ENCODE measurements at regions of chr15 and their contacts with region 1.

Region 1: DNA sequence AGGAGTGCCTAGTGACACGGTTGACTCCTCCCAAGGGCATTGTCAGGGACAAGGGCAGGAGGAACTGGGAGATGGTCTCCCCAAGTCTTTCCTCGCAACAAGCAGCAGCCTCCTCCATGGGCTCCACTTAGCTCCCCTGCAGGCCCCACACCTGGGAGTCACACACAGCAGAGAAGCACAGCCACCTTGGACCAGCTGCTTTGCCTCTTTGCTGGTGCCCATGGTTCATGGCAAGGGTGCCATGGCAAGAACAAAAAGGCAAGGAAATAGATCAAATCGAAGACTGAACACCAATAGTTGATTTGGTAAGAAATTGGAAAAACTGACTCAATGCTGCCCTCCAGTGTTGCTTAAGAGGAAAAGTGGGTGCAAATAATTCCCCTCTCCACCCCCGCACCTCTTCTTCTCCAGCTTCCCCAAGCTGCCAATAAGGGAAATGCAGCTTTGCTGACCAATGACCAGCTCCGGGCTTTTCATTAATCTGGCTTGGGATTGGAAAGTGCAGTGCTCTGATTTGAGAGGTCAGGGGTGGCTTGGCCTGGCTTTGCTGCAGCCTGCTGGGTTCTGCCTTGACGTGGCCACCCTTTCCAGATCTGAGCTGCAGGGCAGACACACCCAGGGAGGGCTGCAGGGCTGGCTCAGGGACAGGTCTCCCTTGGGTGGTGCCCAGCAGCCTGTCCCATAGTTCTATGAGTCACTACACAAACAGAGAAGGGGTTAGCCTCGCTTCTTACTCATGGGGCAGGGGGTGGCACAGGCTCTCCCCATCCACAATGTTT is 162.0 kb downstream of the KLF13 start:
- DNase-seq: peak; percentile 78
- ATAC-seq: peak; percentile 73
- H3K4me3 ChIP-seq: no peak overlapping the region
- H3K27ac ChIP-seq: peak overlapping the region; percentile 49
- H3K4me1 ChIP-seq: peaks cover 18% of the 10 kb centered on the region
- H3K27me3 ChIP-seq: no peaks in the 10 kb centered on the region
- CTCF ChIP-seq: peak; percentile 71 to 93 (median 91)
- EP300 ChIP-seq: no peak
- POLR2A ChIP-seq: no peak
- RAD21 ChIP-seq: peak; percentile 84

Region 2: GRCh38 chr15:30985081-30985531 is 503.5 kb before region 1 on chr15:
- CTCF ChIA-PET with region 1: interaction called, 3 read pairs
- POLR2A ChIA-PET with region 1: no interaction called
- RAD21 ChIA-PET with region 1: no interaction called
- SMC1A ChIA-PET with region 1: no interaction called
- in situ Hi-C with region 1: no loop called
- intact Hi-C with region 1: loop called (anchors 10 kb)
- DNase-seq: no peak
- ATAC-seq: peak; percentile 59
- H3K4me3 ChIP-seq: peak overlapping the region; percentile 14; the same call in 1 of the 2 replicates
- H3K27ac ChIP-seq: peak overlapping the region; percentile 20; the same call in 1 of the 2 replicates
- H3K4me1 ChIP-seq: peaks cover 16% of the 10 kb centered on the region
- H3K27me3 ChIP-seq: no peaks in the 10 kb centered on the region
- CTCF ChIP-seq: no peak
- EP300 ChIP-seq: no peak
- POLR2A ChIP-seq: no peak
- RAD21 ChIP-seq: no peak

Region 3: GRCh38 chr15:31215490-31216214 is 273.0 kb before region 1 on chr15:
- CTCF ChIA-PET with region 1: interaction called, 197 read pairs
- POLR2A ChIA-PET with region 1: interaction called, 4 read pairs
- RAD21 ChIA-PET with region 1: interaction called, 24 read pairs
- SMC1A ChIA-PET with region 1: interaction called, 26 read pairs
- in situ Hi-C with region 1: no loop called
- intact Hi-C with region 1: loop called (anchors 1 kb)
- DNase-seq: no peak
- ATAC-seq: peak; percentile 91
- H3K4me3 ChIP-seq: peak overlapping the region; percentile 79
- H3K27ac ChIP-seq: peak overlapping the region; percentile 87
- H3K4me1 ChIP-seq: peaks cover 10% of the 10 kb centered on the region
- H3K27me3 ChIP-seq: no peaks in the 10 kb centered on the region
- CTCF ChIP-seq: peak; percentile 80 to 89 (median 89)
- EP300 ChIP-seq: no peak
- POLR2A ChIP-seq: peak; percentile 71
- RAD21 ChIP-seq: peak; percentile 88

Region 4: DNA sequence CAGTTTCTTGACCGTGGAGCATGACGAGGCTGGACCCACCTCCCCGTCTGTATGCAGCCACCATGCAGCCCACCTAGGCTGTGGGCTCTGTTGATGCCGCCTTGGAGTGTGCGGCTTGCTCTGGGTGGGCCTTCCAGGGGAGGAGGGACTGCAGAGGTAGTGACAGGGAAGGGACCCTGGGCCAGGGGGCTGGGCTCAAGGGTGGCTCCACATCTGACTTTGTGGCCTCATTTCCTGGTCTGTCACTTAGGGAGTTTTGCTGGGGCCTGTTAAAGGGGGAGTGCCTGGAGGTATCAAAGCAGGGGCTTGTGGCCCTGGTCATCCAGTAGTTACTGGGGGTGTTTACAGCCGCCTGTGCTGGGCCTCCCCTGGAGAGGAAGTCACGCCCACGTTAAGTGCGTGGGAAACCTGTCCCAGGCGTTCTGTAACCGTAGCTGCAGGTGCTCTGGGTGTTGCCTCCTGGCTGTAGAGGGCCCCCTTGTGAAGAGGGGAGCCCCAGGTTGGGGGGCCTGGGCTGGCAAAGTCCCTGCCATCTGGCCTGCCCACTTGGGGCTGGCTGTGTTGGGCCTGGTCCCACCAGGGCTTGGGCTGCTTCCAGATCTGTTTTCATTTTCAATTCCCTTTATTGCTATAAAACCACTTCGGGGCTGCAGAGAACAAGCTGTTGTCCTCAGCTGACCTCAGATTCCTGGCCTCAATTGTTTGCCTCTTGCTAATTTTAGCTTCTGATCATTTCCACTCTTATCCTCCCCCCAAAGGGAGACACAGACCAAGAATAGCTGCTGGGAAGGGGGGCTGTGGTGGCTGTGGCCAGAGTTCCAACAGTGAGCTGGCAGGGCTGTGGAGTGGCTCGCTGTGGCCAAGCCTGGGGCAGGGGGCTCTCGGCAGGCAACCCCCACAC is 135.5 kb before region 1 on chr15:
- CTCF ChIA-PET with region 1: interaction called, 15 read pairs
- POLR2A ChIA-PET with region 1: interaction called, 3 read pairs
- RAD21 ChIA-PET with region 1: interaction called, 7 read pairs
- SMC1A ChIA-PET with region 1: interaction called, 5 read pairs
- in situ Hi-C with region 1: no loop called
- intact Hi-C with region 1: no loop called
- DNase-seq: peak; percentile 83
- ATAC-seq: peak; percentile 87
- H3K4me3 ChIP-seq: peak overlapping the region; percentile 52; the same call in 1 of the 2 replicates
- H3K27ac ChIP-seq: peak overlapping the region; percentile 93
- H3K4me1 ChIP-seq: peaks cover 89% of the 10 kb centered on the region
- H3K27me3 ChIP-seq: no peaks in the 10 kb centered on the region
- CTCF ChIP-seq: peak in 2 of 3 experiments; percentile 7 to 22; a peak in 2 of 6 replicates
- EP300 ChIP-seq: peak; percentile 57 to 70; a peak in 3 of 4 replicates
- POLR2A ChIP-seq: peak; percentile 48; the same call in 1 of the 2 replicates
- RAD21 ChIP-seq: no peak

Region 5: DNA sequence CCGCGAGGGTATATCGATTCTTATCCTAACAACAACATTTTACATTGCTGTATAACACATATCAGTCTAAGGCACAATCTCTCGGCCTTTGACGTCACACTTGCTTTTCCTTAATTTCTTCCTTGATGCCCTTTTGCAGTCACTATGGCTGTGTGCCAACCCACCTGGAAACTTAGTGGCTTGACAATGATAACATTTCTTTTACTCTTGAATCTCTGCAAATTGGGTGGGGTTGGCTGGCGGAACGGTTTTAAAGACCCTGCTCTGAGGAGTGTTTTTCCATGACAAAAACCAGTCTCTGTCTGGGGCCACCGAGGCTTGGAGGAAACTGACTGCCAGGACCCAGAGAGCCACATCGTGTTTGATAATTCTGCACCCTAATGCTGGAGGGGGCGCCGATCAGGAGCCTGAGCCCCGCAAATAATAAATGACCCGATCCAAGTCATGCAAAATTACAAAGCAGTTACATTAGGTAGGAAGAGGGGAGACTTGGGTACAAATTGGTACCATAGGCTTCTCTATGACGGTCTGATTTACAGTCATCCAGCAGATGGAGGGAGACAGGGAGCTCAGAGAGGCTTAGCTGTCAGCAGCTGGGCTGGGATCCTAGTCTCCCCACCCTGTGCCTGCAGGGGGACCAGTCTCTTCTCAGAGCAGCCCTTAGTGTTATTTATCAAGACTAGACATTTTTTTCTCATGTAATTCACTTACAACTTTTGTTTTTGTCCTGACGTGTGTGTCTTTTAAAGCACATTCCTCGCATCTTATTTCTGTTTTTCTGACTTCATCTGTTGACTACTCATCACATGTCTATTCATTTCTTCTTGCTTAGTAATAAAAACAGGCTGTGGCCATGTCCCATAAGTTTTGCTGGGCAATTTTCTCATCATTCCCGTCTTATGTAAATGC is 46.2 kb before region 1 on chr15:
- CTCF ChIA-PET with region 1: interaction called, 336 read pairs
- POLR2A ChIA-PET with region 1: interaction called, 5 read pairs
- RAD21 ChIA-PET with region 1: interaction called, 213 read pairs
- SMC1A ChIA-PET with region 1: interaction called, 166 read pairs
- in situ Hi-C with region 1: loop called (anchors 5 kb)
- intact Hi-C with region 1: loop called (anchors 1 kb)
- DNase-seq: no peak
- ATAC-seq: 0 out of 3 replicates have a peak, but pooled peaks have one; percentile 26
- H3K4me3 ChIP-seq: no peak overlapping the region
- H3K27ac ChIP-seq: no peak overlapping the region
- H3K4me1 ChIP-seq: peaks cover 34% of the 10 kb centered on the region
- H3K27me3 ChIP-seq: no peaks in the 10 kb centered on the region
- CTCF ChIP-seq: peak in 2 of 3 experiments; percentile 5 to 26; a peak in 2 of 6 replicates
- EP300 ChIP-seq: no peak
- POLR2A ChIP-seq: no peak
- RAD21 ChIP-seq: no peak

Region 6: GRCh38 chr15:31472636-31473384 is 15.8 kb before region 1 on chr15:
- CTCF ChIA-PET with region 1: interaction called, 122 read pairs
- POLR2A ChIA-PET with region 1: interaction called, 7 read pairs
- RAD21 ChIA-PET with region 1: interaction called, 63 read pairs
- SMC1A ChIA-PET with region 1: interaction called, 48 read pairs
- in situ Hi-C with region 1: no loop called
- intact Hi-C with region 1: no loop called
- DNase-seq: peak; percentile 79
- ATAC-seq: peak; percentile 94
- H3K4me3 ChIP-seq: peak overlapping the region; percentile 50
- H3K27ac ChIP-seq: peak overlapping the region; percentile 92
- H3K4me1 ChIP-seq: peaks cover 37% of the 10 kb centered on the region
- H3K27me3 ChIP-seq: no peaks in the 10 kb centered on the region
- CTCF ChIP-seq: 0 out of 6 replicates have a peak, but pooled peaks of 1 of the 3 experiments have one; percentile 2
- EP300 ChIP-seq: peak in 1 of 2 experiments; percentile 17; a peak in 1 of 4 replicates
- POLR2A ChIP-seq: peak; percentile 68
- RAD21 ChIP-seq: 0 out of 2 replicates have a peak, but pooled peaks have one; percentile 13

Region 7: DNA sequence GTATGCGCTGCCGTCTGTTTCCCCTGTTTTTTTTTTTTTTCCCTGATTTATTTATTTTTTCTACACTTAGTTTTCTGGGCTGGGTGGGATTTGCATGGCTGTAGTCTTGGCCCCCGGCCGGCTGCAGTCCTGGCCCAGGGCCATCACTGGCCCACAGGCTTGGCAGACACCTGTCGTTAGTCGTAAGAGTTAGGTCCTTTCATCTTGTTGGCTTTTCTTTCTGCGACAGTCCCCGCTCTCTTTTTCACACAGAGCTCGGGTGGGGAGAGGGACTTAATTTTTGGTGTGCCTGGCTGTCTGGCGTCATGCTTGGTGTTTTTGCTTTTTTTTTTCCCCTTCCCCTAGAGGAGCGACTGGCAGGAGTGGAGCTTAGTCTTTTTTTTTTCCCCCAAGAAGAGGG is 21.4 kb after region 1 on chr15:
- CTCF ChIA-PET with region 1: interaction called, 14 read pairs
- POLR2A ChIA-PET with region 1: no interaction called
- RAD21 ChIA-PET with region 1: interaction called, 7 read pairs
- SMC1A ChIA-PET with region 1: interaction called, 5 read pairs
- in situ Hi-C with region 1: no loop called
- intact Hi-C with region 1: no loop called
- DNase-seq: no peak
- ATAC-seq: no peak
- H3K4me3 ChIP-seq: no peak overlapping the region
- H3K27ac ChIP-seq: no peak overlapping the region
- H3K4me1 ChIP-seq: no peaks in the 10 kb centered on the region; the same call in 1 of the 2 replicates
- H3K27me3 ChIP-seq: no peaks in the 10 kb centered on the region
- CTCF ChIP-seq: no peak
- EP300 ChIP-seq: no peak
- POLR2A ChIP-seq: no peak
- RAD21 ChIP-seq: no peak